Activated CD4-positive, alpha-beta T cell treated with anti-CD3 and anti-CD28 coated beads, Interleukin-2, amount 10 ng/mL, durations not matched to agents 24 days and 14 days (primary cell): ENCODE measurements at regions of chr14 and their contacts with region 1.

Region 1: DNA sequence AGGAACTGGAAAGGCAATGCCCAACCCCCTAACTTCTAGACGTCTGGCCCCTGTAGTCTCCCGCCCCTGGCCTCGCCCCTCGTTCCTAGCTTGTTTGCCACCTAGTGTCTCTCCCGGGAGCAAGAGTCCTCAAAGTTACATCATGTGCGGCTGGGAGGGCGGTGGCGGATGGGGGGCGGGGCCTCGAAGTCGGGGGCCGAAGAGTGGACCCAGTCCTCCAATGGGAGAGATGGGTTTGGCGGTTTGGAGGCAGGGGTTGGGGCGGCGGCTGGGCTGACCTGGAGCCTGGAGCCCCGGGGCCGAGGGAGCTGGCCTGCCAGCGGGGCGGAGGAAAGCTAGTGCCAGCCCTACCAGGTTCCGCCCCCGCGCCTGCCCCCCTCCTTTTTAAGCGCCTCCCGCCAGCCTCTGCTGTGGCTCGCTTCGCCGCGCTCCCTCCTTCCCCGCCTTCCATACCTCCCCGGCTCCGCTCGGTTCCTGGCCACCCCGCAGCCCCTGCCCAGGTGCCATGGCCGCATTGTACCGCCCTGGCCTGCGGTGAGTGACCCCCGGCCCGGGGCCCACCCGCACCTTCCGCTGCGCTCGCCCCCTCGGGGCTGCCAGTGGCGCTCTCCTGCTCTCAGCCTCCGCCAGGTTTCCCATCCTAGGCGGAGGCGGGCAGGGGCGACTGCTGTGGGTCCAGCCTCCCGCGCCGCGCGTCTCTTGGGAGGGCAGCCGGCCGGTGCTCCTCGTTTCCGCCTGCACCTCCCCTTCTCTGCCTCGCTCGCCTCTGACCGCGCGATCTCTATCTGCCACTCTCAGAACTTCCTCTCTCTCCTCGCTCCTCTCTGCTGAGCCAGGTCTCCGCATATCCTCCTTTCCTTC is at the start of gene PCK2:
- DNase-seq: peak; percentile 93
- H3K4me3 Mint-ChIP-seq: peak within 1 kb of the TSS; percentile 94
- H3K27ac Mint-ChIP-seq: peak within 1 kb of the TSS; percentile 94
- H3K4me1 Mint-ChIP-seq: peaks cover 34% of the 10 kb centered on the region
- H3K27me3 Mint-ChIP-seq: no peaks in the 10 kb centered on the region
- total RNA-seq, gene PCK2: 63.6 and 64.2 TPM in 2 replicates

Region 2: DNA sequence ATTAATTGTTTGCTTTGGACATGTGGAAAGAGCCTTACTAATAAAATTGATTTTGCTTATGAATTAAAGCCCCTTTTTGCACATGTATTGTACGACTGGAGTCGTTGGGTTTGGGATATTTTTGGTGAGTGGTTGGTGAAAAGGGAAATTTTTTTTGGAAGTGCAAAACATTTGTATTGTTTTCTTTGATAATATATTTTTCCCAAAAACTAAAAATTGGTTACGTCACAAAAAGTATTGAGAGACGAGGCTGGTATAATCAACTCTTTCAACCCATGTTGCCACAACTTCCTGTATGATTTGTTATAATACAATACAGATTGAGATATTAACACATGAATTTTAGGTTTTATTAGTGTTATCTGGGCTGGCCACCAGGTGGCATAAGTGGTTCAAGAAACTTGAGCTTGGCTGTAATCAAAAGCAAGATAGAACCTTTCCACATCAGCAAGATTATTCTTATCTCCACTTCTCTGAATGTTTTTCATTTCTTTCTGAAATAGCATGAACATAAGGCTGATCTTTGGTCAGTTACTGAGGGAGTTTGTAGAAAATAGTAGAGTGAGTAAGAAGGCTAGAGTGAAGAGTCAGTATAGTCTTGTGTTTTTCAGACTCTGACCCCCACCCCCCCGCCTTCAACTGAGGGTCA is 615.9 kb before region 1 on chr14:
- intact Hi-C with region 1: no loop called
- DNase-seq: peak; percentile 89
- H3K4me3 Mint-ChIP-seq: no peak overlapping the region
- H3K27ac Mint-ChIP-seq: no peak overlapping the region
- H3K4me1 Mint-ChIP-seq: peaks cover 2% of the 10 kb centered on the region
- H3K27me3 Mint-ChIP-seq: no peaks in the 10 kb centered on the region

Region 3: DNA sequence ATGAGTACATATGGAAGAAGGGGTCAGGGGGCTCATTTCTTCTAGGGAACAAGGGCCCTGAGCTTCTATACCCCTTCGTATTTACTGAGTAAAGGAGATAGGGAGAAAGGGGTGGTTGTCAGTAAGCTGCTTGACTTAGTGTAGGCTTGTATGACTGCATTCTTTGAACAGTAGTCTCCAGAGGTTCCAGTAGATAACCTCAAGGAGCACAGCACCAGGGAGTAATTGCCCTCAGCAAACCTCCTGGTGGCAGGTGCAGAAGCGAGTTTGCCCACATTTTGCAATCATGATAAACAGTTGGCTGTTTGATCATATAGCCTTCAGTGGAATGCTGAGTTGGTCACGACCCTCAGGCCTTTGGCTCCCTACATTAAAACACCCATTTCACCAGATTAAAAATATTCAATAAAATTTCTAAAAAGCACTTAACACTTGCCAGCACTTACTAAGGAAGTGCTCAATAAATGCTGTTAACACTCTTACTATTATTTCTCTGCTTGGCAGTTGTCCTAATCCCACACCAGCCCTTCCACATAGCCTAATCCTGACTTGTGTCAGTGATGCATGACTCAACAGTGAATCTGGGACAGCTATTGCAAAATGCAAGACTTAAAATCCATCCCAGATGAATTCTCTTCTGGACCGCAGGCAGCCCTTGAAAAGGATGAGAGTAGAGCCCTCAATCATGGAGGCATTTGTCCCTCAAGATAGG is 109.1 kb before region 1 on chr14:
- intact Hi-C with region 1: loop called (anchors 5 kb)
- DNase-seq: no peak
- H3K4me3 Mint-ChIP-seq: no peak overlapping the region
- H3K27ac Mint-ChIP-seq: no peak overlapping the region
- H3K4me1 Mint-ChIP-seq: peaks cover 26% of the 10 kb centered on the region
- H3K27me3 Mint-ChIP-seq: no peaks in the 10 kb centered on the region

Region 4: DNA sequence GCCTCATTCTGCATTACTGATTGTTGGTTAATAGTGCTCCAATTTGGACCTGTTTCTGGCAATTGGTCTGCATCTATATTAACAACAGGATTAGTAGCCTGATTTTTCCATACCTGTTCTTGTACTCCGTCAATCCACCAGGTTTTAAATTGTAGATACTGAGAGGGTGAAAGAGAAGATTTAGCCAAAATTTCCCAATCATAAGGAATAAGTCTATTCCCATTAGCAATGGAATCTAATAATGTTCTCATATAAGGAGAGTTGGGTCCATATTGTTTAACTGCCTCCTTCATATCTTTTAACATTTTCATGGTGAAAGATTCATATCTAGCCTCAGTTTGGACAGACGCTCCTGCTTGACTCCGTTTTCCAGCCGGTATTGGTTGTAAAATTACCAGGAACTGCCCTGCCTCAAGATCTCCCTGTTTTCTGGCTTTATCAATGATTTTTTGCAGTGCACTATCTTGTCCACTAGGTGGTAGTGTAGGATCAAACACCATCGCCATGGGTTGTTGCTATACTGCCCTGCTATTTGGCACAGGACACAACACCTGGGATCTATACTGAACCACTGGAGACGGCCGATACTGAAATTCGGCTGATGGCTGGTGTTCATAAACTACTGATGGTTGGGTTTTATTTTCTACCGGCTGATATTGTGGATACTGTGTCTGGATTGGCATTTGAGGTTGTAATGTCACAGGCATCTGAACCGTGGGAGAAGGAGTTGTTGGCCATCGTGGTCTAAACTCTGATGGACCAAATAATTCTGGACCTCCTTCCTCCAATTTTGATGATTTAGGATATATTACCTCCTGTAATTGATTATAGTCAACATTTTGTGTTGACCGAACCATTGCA is 80.2 kb before region 1 on chr14:
- intact Hi-C with region 1: loop called (anchors 1 kb)
- DNase-seq: peak; percentile 90
- H3K4me3 Mint-ChIP-seq: no peak overlapping the region
- H3K27ac Mint-ChIP-seq: no peak overlapping the region
- H3K4me1 Mint-ChIP-seq: peaks cover 22% of the 10 kb centered on the region
- H3K27me3 Mint-ChIP-seq: peaks cover 18% of the 10 kb centered on the region

Region 5: GRCh38 chr14:24051789-24052655 is 42.1 kb before region 1 on chr14 and contains the start of gene CARMIL3:
- intact Hi-C with region 1: loop called (anchors 1 kb)
- DNase-seq: peak; percentile 92
- H3K4me3 Mint-ChIP-seq: peak within 1 kb of the TSS; percentile 76
- H3K27ac Mint-ChIP-seq: peak within 1 kb of the TSS; percentile 76
- H3K4me1 Mint-ChIP-seq: peaks cover 20% of the 10 kb centered on the region
- H3K27me3 Mint-ChIP-seq: peaks cover 17% of the 10 kb centered on the region
- total RNA-seq, gene CARMIL3: 1.3 and 1.5 TPM in 2 replicates

Region 6: DNA sequence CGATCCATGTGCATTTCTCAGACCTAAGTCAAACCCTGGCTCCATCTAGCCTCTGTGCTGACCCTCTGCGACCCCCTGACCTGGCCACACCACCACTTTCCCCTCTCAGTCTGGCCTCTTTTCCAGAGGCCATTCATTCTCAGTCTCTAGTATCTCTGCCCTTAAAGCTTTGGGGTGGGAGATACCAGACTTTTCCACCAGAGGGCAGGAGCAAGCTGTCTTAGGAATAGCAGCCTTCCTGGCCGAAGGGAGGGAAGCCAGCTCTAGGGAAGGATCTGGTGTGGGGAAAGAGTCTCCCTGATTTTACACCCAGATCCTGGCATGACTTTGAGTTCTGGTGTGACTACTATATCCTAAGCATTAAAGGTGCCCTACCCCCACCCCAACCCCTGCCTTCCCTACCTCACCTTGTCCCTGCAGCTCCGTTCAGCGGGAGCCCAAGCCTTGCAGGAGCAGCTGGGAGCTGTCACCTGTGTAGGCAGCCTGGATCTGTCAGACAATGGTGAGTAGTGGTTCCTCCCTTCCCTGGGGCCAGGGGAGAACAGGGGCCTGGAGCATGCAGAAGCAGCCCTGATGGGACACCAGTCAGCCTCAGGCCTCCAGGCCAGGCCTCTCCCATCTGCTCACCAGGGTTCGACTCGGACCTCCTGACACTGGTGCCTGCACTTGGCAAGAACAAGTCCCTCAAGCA is 35.7 kb before region 1 on chr14:
- intact Hi-C with region 1: loop called (anchors 1 kb)
- DNase-seq: peak; percentile 89
- H3K4me3 Mint-ChIP-seq: no peak overlapping the region
- H3K27ac Mint-ChIP-seq: no peak overlapping the region
- H3K4me1 Mint-ChIP-seq: peaks cover 11% of the 10 kb centered on the region
- H3K27me3 Mint-ChIP-seq: no peaks in the 10 kb centered on the region

Region 7: GRCh38 chr14:24080888-24081738 is 13.0 kb before region 1 on chr14:
- intact Hi-C with region 1: loop called (anchors 1 kb)
- DNase-seq: peak; percentile 93
- H3K4me3 Mint-ChIP-seq: peak overlapping the region; percentile 84
- H3K27ac Mint-ChIP-seq: peak overlapping the region; percentile 78
- H3K4me1 Mint-ChIP-seq: peaks cover 16% of the 10 kb centered on the region
- H3K27me3 Mint-ChIP-seq: peaks cover 6% of the 10 kb centered on the region

Region 8: DNA sequence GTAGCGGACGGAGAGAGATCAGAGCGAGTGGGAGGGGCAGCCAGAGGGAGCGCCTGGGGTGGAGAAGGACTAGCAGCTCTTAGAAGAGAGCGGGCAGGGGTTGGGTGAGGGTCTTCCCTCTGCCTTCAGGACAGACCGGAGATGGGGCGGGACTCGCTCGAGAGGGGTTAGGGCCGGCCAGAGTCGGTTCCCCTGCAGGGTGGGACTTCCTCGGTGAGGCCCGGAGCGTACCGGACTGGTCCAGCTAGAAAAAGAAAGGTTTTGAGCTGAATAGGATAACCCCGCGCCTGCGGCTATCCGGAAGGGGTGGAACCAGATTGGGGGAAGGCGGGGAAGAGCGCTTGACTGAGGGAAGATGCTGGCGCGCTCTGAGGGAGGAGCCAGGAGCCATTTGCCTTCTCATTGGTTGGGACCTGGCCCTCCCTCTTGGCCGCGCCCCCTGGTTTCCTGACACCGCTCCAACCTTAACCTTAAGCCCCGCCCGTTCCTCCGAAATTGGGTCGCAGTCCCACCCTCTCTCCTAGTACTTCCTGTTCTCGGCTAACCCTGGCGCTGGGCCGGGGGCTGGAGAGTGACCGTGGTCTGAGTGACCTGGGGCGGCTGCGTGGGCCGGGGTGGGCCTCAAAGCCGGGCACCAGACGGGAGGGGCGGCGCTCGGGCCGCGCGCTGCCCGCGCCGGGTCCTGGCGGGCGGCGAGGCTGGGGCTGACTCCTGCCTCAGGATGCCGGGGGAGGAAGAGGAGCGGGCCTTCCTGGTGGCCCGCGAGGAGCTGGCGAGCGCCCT is 53.0 kb after region 1 on chr14 and contains the start of gene RNF31:
- intact Hi-C with region 1: loop called (anchors 2 kb)
- DNase-seq: peak; percentile 99
- H3K4me3 Mint-ChIP-seq: peak within 1 kb of the TSS; percentile 97
- H3K27ac Mint-ChIP-seq: peak within 1 kb of the TSS; percentile 99
- H3K4me1 Mint-ChIP-seq: peaks cover 59% of the 10 kb centered on the region
- H3K27me3 Mint-ChIP-seq: no peaks in the 10 kb centered on the region
- total RNA-seq, gene RNF31: 95.1 and 95.6 TPM in 2 replicates

Region 9: DNA sequence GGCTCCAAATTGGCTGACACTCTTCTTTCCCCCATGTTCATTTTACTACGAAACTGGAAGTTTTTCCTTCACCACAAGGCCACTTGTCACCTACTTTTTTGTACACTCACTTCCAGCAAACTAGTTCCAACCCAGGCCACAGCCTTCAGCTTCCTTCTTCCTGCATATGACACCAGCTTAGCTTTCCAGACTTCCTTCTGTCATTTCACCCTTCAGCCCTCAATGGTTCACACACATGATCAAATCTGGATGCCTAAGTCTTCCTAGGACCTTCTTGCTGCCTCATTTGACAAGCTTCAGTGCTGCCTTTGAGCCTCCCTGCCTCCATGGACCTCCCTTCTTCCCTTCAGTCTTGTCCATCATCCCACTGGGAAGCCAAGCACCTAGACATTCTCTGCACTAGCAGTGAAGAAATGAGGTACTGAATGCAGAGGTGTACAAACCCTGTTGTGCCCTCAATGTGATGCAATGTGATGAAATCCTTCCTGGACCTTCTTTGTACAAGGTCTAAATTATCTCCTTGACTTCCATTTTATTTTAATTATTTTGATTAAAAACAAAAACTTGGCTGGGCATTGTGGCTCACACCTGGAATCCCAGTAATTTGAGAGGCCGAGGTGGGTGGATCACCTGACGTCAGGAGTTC is 73.5 kb after region 1 on chr14:
- intact Hi-C with region 1: no loop called
- DNase-seq: no peak
- H3K4me3 Mint-ChIP-seq: no peak overlapping the region
- H3K27ac Mint-ChIP-seq: peak overlapping the region; percentile 79
- H3K4me1 Mint-ChIP-seq: peaks cover 50% of the 10 kb centered on the region
- H3K27me3 Mint-ChIP-seq: no peaks in the 10 kb centered on the region